Calu3 (cell line): ENCODE measurements at regions of chrX and their contacts with region 1.

Region 1: DNA sequence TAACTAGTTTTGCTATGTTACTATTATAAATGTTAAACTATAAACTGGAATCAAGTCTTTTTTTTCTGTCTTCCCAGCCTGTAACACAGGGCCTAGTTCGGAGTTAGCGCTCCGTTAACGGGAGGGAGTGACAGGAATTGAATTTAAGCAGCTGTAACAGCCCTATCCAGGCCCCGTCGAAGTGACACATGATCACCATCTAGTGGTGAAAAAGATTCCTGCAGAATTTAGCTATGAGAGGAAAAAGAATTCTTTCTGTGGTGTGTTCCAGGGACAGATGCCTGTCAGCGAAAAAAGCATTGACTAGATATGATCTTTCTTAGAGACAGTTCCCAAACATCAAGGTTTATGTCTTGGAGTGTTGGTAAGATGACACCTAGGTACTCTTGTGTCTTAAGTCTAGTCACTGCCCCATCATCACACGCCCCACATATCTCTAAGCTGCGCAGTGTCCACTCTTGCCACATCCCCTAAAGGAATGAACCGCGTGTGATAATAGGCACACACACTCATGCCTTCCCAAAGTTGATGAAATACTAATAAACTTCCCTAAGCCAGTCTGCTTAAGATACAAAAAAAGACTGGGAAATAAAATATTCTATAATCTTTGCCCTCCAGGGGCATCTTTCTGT is 2.0 kb downstream of the GAB3 start:
- DNase-seq: peak; percentile 51
- H3K4me3 Mint-ChIP-seq: no peak overlapping the region
- H3K27ac Mint-ChIP-seq: no peak overlapping the region
- H3K4me1 Mint-ChIP-seq: no peaks in the 10 kb centered on the region
- H3K27me3 Mint-ChIP-seq: peaks cover 44% of the 10 kb centered on the region
- CTCF ChIP-seq: peak; percentile 24

Region 2: DNA sequence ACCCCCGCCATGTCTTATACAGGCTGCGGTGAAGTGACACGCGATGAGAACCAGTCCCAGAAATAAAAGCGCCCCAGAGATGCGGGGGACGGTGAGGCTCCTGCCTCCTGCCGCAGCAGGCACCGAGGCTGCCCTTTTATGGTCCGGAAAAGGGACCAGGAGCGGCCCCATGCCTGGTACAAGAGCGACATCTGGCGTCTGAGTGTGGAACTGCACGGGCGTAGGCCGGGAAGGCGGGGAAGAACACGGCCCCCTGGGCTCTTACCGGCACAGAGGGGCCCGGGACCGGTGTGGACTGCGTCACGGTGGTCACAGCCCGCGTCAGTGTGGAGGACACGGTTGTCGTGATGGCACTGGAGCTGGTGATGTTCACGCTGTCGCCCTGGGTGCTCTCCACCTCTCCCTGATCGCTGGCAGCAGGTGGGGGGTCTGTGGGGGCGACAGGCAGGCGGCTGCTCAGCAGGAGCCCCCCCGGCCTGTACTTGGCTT is 795.4 kb before region 1 on chrX:
- CTCF ChIA-PET with region 1: no interaction called
- intact Hi-C with region 1: no loop called
- DNase-seq: peak; percentile 73
- H3K4me3 Mint-ChIP-seq: no peak overlapping the region
- H3K27ac Mint-ChIP-seq: peak overlapping the region; percentile 47
- H3K4me1 Mint-ChIP-seq: no peaks in the 10 kb centered on the region
- H3K27me3 Mint-ChIP-seq: no peaks in the 10 kb centered on the region
- CTCF ChIP-seq: peak; percentile 97

Region 3: DNA sequence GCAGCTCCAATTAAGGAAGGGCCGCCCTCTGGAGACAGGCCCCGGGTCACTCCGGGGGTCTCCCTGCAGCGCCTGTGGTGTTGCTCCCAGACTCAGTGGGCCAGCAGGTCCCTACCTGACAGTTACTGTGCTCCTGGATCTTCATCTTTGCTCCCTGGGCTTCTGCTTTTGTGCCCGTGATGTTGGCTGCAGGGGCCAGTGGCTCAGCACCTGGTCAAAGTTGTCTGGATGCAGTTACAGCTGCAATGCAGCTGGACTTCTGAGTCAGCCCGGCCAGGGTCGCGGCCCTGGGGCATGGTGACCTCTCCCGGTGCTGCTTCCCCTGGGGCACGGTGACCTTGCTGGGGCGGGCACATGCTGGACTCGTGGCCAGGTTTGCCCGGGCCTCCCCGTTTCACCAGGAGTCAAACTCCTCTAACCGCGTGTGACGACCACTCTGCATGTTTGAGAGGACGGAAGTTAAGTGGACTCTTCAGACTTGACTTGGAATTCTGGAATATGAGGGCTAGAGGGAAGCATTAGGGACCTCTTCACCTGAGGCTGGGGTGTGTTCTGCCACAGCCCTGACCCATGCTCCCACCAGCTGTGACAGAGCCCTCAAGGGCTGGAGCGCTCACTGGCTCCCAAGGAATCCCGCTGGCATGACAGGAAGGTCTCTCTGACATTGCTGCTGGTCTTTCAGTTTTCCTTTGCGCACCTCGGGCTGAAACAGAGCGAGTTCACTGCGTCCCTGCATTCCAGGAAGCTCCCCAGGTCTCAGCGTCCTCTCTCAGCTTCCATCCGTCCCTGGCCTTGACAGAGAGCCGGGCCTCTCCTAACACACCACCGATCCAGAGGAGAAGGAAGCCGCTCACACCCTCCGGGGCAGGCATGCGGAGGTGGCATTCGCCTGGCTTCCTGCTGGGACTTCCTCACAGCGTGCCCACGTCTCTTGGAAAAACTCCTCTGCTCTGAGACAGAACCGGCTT is 99.0 kb before region 1 on chrX:
- CTCF ChIA-PET with region 1: no interaction called
- intact Hi-C with region 1: no loop called
- DNase-seq: no peak
- H3K4me3 Mint-ChIP-seq: peak overlapping the region; percentile 26
- H3K27ac Mint-ChIP-seq: no peak overlapping the region
- H3K4me1 Mint-ChIP-seq: peaks cover under 1% of the 10 kb centered on the region
- H3K27me3 Mint-ChIP-seq: peaks cover 35% of the 10 kb centered on the region
- CTCF ChIP-seq: no peak

Region 4: GRCh38 chrX:154734061-154734781 is 14.6 kb before region 1 on chrX:
- CTCF ChIA-PET with region 1: interaction called, 11 read pairs
- intact Hi-C with region 1: no loop called
- DNase-seq: no peak
- H3K4me3 Mint-ChIP-seq: no peak overlapping the region
- H3K27ac Mint-ChIP-seq: no peak overlapping the region
- H3K4me1 Mint-ChIP-seq: peaks cover 26% of the 10 kb centered on the region
- H3K27me3 Mint-ChIP-seq: peaks cover 48% of the 10 kb centered on the region
- CTCF ChIP-seq: no peak

Region 5: GRCh38 chrX:154762523-154763289 is 13.9 kb after region 1 on chrX and contains the start of gene DKC1:
- CTCF ChIA-PET with region 1: interaction called, 11 read pairs
- intact Hi-C with region 1: no loop called
- DNase-seq: peak; percentile 98
- H3K4me3 Mint-ChIP-seq: peak within 1 kb of the TSS; percentile 91
- H3K27ac Mint-ChIP-seq: peak within 1 kb of the TSS; percentile 79
- H3K4me1 Mint-ChIP-seq: peaks cover 11% of the 10 kb centered on the region
- H3K27me3 Mint-ChIP-seq: no peaks in the 10 kb centered on the region
- CTCF ChIP-seq: no peak
- total RNA-seq, gene DKC1: 112 and 120 TPM in 2 replicates

Region 6: GRCh38 chrX:154840856-154841255 is 92.0 kb after region 1 on chrX:
- CTCF ChIA-PET with region 1: interaction called, 3 read pairs
- intact Hi-C with region 1: loop called (anchors 2 kb)
- DNase-seq: peak; percentile 3
- H3K4me3 Mint-ChIP-seq: no peak overlapping the region
- H3K27ac Mint-ChIP-seq: no peak overlapping the region
- H3K4me1 Mint-ChIP-seq: no peaks in the 10 kb centered on the region
- H3K27me3 Mint-ChIP-seq: peaks cover 47% of the 10 kb centered on the region
- CTCF ChIP-seq: peak; percentile 24